Gastrocnemius medialis (tissue), 4 donors: ENCODE measurements at regions of chr18 and their contacts with region 1.

Region 1: GRCh38 chr18:57881818-57882413 is 78.8 kb upstream of the ATP8B1 start:
- DNase-seq: peak; percentile 16 to 18
- ATAC-seq: peak; percentile 74 to 78
- H3K4me3 ChIP-seq: no peak overlapping the region
- H3K27ac ChIP-seq: no peak overlapping the region
- H3K4me1 ChIP-seq: no peaks in the 10 kb centered on the region
- H3K27me3 ChIP-seq: no peaks in the 10 kb centered on the region
- CTCF ChIP-seq: peak; percentile 67 to 83 (median 72)
- POLR2A ChIP-seq: no peak

Region 2: DNA sequence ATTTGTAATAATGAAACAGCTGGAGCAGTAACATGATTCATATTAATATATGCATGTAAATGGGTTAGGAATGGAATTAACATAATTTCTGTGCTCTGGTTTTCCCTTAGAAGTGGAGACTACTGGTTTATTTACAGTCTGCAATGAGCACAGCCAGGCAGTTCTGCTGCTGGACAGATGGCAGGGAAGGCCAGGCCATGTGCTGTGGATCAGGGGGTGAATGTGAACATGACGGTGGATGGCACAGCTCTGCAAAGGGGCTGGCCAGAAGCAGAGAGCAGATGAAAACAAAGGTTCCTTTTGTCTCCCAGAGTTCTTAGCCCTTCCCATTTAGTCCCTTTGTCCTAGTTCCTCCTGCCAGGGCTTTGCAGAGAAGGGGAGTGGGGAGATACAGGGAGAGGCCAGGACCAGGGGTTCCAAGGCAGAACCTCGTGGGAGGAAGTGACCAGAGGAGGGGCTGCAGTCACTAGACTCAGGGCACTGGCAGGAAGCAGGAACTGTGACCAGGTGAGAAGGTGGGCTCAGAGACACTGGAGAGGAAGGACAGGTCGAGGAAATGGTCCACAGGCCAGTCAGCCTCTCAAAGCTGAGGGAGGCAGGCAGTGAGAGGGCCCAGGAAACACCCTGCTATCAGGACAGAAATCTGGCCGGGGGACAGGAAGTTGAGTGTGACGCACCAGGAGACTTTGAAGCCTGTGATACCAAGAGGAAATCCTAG is 34.1 kb after region 1 on chr18:
- in situ Hi-C with region 1: no loop called
- intact Hi-C with region 1: no loop called
- DNase-seq: no peak
- ATAC-seq: no peak
- H3K4me3 ChIP-seq: no peak overlapping the region
- H3K27ac ChIP-seq: no peak overlapping the region
- H3K4me1 ChIP-seq: no peaks in the 10 kb centered on the region
- H3K27me3 ChIP-seq: no peaks in the 10 kb centered on the region
- CTCF ChIP-seq: no peak
- POLR2A ChIP-seq: no peak

Region 3: GRCh38 chr18:58117786-58118403 is 236.0 kb after region 1 on chr18:
- in situ Hi-C with region 1: loop called in 2 of 4 experiments (anchors 10 to 25 kb)
- intact Hi-C with region 1: loop called (anchors 5 kb)
- DNase-seq: no peak
- ATAC-seq: no peak
- H3K4me3 ChIP-seq: no peak overlapping the region
- H3K27ac ChIP-seq: no peak overlapping the region
- H3K4me1 ChIP-seq: no peaks in the 10 kb centered on the region
- H3K27me3 ChIP-seq: no peaks in the 10 kb centered on the region
- CTCF ChIP-seq: no peak
- POLR2A ChIP-seq: no peak

Region 4: DNA sequence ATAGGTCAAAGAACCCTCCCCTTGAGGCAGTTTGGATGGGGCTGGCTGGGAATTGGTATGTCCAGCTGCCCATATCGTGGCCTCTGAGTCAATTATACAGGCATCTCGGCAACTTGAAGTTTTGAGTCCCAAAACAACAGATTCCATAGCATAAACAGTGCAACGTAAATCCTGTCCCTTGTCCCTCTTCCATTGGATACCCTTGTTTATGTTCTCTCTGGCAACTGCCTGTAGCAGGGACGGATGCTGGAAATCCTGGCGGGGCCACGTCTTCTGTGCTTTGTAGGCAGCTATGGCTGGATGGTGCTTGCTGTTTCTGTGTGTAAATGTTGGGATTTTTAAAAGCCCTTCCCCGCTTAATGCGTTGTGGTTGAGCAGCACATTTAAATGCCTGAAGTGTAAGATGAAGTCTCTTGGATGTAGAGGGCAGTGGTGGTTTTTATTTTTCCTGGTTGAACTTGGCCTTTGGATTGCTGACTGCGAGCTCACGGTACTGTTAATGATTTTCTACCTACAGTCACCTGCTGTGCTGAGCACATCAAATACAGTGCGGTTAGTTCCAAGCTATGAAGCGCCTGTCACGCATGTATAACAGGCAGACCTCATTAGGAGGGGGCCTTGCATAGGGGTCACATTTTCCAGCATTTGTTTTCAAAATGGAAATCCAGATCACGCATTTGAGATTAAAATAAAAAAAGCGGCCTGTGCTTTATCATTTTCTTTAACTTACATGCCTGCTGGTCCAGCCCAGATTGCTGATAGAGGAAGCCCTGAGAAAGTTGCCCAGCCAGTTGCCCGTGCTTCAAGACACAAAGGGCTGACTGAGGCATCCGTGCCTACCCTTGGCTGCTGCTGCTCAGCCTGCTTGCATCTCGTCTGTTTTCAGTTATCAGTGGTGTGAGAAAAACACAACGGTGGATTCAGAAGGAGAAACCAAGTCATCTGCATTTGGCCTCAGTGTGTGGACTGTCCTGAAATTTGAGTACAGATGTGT is 246.8 kb after region 1 on chr18:
- in situ Hi-C with region 1: loop called in 2 of 4 experiments (anchors 10 to 25 kb)
- intact Hi-C with region 1: loop called (anchors 5 kb)
- DNase-seq: no peak
- ATAC-seq: no peak
- H3K4me3 ChIP-seq: no peak overlapping the region
- H3K27ac ChIP-seq: no peak overlapping the region
- H3K4me1 ChIP-seq: no peaks in the 10 kb centered on the region
- H3K27me3 ChIP-seq: no peaks in the 10 kb centered on the region
- CTCF ChIP-seq: no peak
- POLR2A ChIP-seq: no peak

Region 5: DNA sequence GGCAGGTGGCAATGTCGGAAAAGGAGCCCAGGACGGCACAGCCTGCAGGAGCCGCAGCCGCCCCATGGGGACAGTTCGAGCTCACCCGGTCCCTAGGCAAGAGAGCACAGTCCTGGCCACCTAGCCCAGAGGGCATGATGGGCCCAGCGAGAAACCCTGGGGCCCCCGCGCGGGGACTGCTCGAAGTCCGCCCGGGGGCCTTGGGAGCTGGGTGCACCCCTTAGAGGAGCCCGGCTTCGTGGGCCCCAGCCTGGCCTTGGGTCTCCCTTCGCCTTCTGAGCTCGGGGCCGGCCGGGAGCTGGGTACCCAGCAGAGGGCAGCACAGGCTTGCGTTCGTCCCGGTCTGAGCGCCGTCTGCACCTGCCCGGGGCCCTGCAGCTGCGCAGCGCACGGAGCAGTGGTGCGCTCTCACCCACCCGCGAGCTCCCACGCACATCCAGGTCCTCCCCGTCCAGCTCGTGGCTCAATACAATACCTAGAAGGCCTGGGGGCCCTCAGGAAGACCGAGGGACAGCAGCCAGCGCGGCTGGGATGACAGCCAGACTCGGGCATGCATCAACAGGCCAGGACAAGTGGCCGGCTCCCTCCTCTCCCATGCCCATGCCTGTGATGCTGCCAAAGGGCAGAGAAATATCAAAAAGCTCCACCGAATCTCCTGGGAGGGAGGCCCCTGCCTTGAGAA is 886.5 kb after region 1 on chr18:
- in situ Hi-C with region 1: no loop called
- intact Hi-C with region 1: loop called (anchors 10 kb)
- DNase-seq: peak; percentile 53 to 69
- ATAC-seq: peak; percentile 82 to 87
- H3K4me3 ChIP-seq: peak overlapping the region; percentile 44 to 67 (median 52)
- H3K27ac ChIP-seq: peak overlapping the region in 3 of 4 donors; percentile 25 to 33 (median 28)
- H3K4me1 ChIP-seq: peaks cover 3 to 13% of the 10 kb centered on the region in 2 donors
- H3K27me3 ChIP-seq: no peaks in the 10 kb centered on the region
- CTCF ChIP-seq: peak; percentile 69 to 93 (median 90)
- POLR2A ChIP-seq: no peak